ENCODE measurements at regions of chr9 and their contacts with region 1.

Region 1: DNA sequence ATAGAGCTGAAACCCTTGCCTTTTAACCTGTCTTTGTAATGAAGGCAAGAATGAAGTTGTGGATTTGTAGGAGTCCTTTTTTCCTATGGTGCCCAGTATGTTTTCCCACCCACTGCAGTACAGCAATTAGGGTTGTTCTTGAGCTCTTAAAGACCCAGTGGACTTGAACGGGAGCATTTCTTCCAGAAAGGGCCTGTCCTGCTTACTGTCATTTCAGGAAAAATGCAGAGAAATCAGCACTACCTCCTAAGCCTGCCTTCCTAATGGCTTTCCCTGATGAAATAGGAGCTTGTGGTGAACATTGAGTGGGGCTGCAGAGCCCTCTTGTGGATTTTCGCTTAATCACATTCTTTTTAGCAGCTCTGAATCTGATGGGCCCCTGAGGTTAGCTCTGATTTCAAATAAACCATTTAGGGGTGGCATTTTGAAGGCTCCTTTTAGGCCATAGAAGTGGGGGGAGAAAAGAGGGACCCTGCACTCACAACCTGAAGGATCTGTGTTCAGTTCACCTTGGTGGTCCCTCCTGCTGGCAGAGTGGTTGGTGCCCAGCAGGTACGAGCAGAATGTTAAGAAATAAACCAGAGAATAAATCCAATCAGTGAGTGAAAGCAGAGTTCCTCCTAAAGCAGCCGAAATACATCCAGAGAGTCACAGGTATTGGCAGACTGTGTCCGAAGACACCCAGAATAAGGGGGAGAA is 188.0 kb upstream of the KLF9 start:
- DNase-seq: peak in 1 of 2 donors; percentile 69
- H3K4me3 ChIP-seq: no peak overlapping the region
- CTCF ChIP-seq: peak in 1 of 3 donors; percentile 93
- POLR2A ChIP-seq: no peak

Region 2: GRCh38 chr9:69981686-69982450 is 620.6 kb before region 1 on chr9:
- intact Hi-C with region 1: loop called (anchors 10 kb)
- DNase-seq: no peak
- H3K4me3 ChIP-seq: no peak overlapping the region
- CTCF ChIP-seq: no peak
- POLR2A ChIP-seq: no peak

Region 3: GRCh38 chr9:70013598-70014196 is 588.8 kb before region 1 on chr9:
- intact Hi-C with region 1: no loop called
- DNase-seq: peak in 1 of 2 donors; percentile 30
- H3K4me3 ChIP-seq: no peak overlapping the region
- CTCF ChIP-seq: no peak
- POLR2A ChIP-seq: no peak

Region 4: GRCh38 chr9:70352802-70353201 is 249.7 kb before region 1 on chr9:
- intact Hi-C with region 1: loop called (anchors 5 kb)
- DNase-seq: no peak
- H3K4me3 ChIP-seq: no peak overlapping the region
- CTCF ChIP-seq: peak in 1 of 3 donors; percentile 30
- POLR2A ChIP-seq: no peak

Measured in lower leg skin (tissue), 4 donors.